Naive thymus-derived CD4-positive, alpha-beta T cell (primary cell): ENCODE measurements at regions of chr12 and their contacts with region 1.

Region 1: DNA sequence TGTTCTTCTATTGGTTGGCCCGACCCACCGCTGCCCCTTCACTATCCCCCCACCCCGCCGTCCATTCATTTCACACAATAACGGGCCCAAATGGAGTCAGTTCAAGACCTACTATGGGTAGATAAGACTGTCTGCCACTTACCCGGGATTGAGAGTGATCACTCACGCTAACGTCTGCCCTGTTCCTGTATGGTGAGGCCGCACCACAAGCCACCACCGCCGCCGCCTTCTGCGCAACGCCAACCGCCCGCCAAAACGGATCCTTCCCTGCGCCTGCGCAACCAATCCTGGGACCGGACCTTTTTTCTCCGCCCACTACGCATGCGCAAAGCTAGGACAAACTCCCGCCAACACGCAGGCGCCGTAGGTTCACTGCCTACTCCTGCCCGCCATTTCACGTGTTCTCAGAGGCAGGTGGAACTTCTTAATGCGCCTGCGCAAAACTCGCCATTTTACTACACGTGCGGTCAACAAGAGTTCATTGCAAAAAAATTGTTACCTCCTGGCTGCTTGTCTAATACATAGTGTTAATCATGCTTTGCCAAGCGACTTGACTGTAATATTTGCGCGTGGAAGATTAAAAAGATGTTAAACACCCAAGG is at the start of gene CBX5:
- DNase-seq: peak; percentile 98 to 100 (median 100)
- ATAC-seq: peak; percentile 63
- H3K4me3 ChIP-seq: peak within 1 kb of the TSS; percentile 97
- H3K4me3 Mint-ChIP-seq: no peak within 1 kb of the TSS
- H3K27ac ChIP-seq: peak within 1 kb of the TSS; percentile 92
- H3K27ac Mint-ChIP-seq: no peak within 1 kb of the TSS
- H3K4me1 ChIP-seq: peaks cover 46 to 52% of the 10 kb centered on the region in 2 donors
- H3K4me1 Mint-ChIP-seq: peaks cover 16 to 57% (median 47%) of the 10 kb centered on the region in 7 donors
- H3K27me3 ChIP-seq: no peaks in the 10 kb centered on the region
- H3K27me3 Mint-ChIP-seq: no peaks in the 10 kb centered on the region
- total RNA-seq, gene CBX5: 40.3 to 133 (median 77.2) TPM

Region 2: DNA sequence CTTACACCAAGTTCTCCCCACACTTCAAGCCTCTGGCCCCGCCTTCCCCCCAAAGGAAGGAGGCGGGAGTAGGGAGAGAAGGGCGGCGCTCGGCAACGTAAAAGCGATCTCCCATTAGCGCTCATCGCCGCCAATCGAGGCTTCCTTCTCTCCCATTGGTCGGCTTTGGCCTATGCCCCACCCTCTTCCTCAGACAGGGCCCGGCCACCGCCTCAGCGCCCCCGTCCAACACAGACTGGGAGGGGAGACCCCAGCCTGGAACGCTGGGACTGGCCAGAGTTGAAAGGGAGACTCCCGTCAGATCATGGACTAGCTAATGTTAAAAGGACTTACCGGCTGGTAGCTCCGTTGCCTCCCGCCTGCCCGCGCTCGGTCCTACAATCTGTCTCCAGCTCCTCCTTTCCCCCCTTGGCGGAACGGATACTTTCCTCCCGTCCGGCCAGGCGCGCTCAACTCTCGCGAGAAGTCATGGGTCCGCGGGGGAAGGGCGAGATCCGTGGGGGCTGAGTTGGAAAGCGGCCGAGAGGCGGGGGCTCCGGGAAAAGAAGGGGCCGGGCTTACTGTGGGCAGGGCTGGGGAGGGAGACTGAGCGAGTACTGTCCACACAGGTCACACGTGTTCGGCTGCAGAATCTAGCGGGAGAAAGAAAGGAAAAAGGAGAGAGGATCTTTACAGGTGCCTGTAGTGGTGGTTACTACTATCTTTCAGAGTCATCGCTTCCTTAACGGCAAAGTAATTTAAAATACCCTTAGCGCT is 653.8 kb before region 1 on chr12 and contains the start of gene ATF7:
- CTCF ChIA-PET with region 1: no interaction called
- POLR2A ChIA-PET with region 1: no interaction called
- intact Hi-C with region 1: loop called in 1 of 2 experiments (anchors 1 kb)
- DNase-seq: peak; percentile 95 to 100 (median 99)
- ATAC-seq: peak; percentile 97
- H3K4me3 ChIP-seq: peak within 1 kb of the TSS; percentile 92
- H3K4me3 Mint-ChIP-seq: peak within 1 kb of the TSS; percentile 97 to 100 (median 98)
- H3K27ac ChIP-seq: peak within 1 kb of the TSS; percentile 83
- H3K27ac Mint-ChIP-seq: peak within 1 kb of the TSS; percentile 95 to 99 (median 97)
- H3K4me1 ChIP-seq: peaks cover 20 to 32% of the 10 kb centered on the region in 2 donors
- H3K4me1 Mint-ChIP-seq: peaks cover 30 to 55% (median 49%) of the 10 kb centered on the region in 7 donors
- H3K27me3 ChIP-seq: no peaks in the 10 kb centered on the region
- H3K27me3 Mint-ChIP-seq: peaks cover 0 to 6% (median 0%) of the 10 kb centered on the region in 5 donors
- total RNA-seq, gene ATF7: 21.9 to 39.5 (median 30.9) TPM

Region 3: DNA sequence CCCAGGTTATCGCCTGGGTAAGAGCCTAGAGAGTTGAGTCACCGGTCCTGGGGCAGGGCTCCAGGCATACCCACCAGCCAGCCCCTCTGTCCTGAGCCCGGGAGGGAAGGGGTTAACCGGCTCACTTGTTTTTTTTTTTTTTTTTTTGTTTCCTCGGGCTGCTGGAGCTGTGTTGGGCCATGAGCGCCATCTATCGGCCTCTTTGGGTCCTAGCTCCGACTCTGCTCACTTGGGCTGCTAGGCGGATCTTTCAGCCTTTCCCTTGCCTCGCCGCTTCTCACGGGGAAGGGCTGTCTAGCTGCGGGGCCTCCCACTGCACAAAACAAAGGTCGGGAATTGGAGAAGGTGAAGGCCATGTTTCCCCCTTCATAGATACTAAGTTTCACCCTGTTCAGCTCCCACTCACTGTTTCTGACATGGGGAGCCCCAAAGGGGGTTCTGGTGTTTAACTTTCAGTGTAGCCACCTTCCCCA is 88.4 kb before region 1 on chr12:
- CTCF ChIA-PET with region 1: no interaction called
- POLR2A ChIA-PET with region 1: interaction called, 3 read pairs
- intact Hi-C with region 1: loop called in 1 of 2 experiments (anchors 1 kb)
- DNase-seq: peak; percentile 58 to 85 (median 76)
- ATAC-seq: peak; percentile 82
- H3K4me3 ChIP-seq: no peak overlapping the region
- H3K4me3 Mint-ChIP-seq: peak overlapping the region in 3 of 10 donors; percentile 10 to 44 (median 32)
- H3K27ac ChIP-seq: no peak overlapping the region
- H3K27ac Mint-ChIP-seq: peak overlapping the region in 3 of 9 donors; percentile 3 to 48 (median 17)
- H3K4me1 ChIP-seq: peaks cover 8 to 9% of the 10 kb centered on the region in 2 donors
- H3K4me1 Mint-ChIP-seq: peaks cover 17 to 31% (median 27%) of the 10 kb centered on the region in 7 donors
- H3K27me3 ChIP-seq: peaks cover 0 to 6% of the 10 kb centered on the region in 2 donors
- H3K27me3 Mint-ChIP-seq: peaks cover 39 to 61% (median 46%) of the 10 kb centered on the region in 5 donors

Region 4: GRCh38 chr12:54259194-54260011 is 20.6 kb before region 1 on chr12:
- CTCF ChIA-PET with region 1: interaction called, 3 read pairs
- POLR2A ChIA-PET with region 1: interaction called, 21 read pairs
- intact Hi-C with region 1: loop called (anchors 1 to 2 kb)
- DNase-seq: peak; percentile 17 to 70 (median 55)
- ATAC-seq: peak; percentile 87
- H3K4me3 ChIP-seq: no peak overlapping the region
- H3K4me3 Mint-ChIP-seq: peak overlapping the region in 9 of 10 donors; percentile 46 to 75 (median 71)
- H3K27ac ChIP-seq: peak overlapping the region; percentile 49
- H3K27ac Mint-ChIP-seq: peak overlapping the region; percentile 19 to 95 (median 78)
- H3K4me1 ChIP-seq: peaks cover 0 to 19% of the 10 kb centered on the region in 2 donors
- H3K4me1 Mint-ChIP-seq: peaks cover 16 to 43% (median 31%) of the 10 kb centered on the region in 7 donors
- H3K27me3 ChIP-seq: no peaks in the 10 kb centered on the region
- H3K27me3 Mint-ChIP-seq: no peaks in the 10 kb centered on the region

Region 5: GRCh38 chr12:54324617-54325441 is 44.9 kb after region 1 on chr12 and contains the start of gene COPZ1:
- CTCF ChIA-PET with region 1: interaction called, 3 read pairs
- POLR2A ChIA-PET with region 1: interaction called, 38 read pairs
- intact Hi-C with region 1: loop called (anchors 1 kb)
- DNase-seq: peak; percentile 69 to 98 (median 94)
- ATAC-seq: peak; percentile 97
- H3K4me3 ChIP-seq: peak within 1 kb of the TSS; percentile 95
- H3K4me3 Mint-ChIP-seq: peak within 1 kb of the TSS; percentile 87 to 100 (median 95)
- H3K27ac ChIP-seq: peak within 1 kb of the TSS; percentile 80
- H3K27ac Mint-ChIP-seq: peak within 1 kb of the TSS; percentile 91 to 99 (median 95)
- H3K4me1 ChIP-seq: peaks cover 4 to 22% of the 10 kb centered on the region in 2 donors
- H3K4me1 Mint-ChIP-seq: peaks cover 8 to 46% (median 42%) of the 10 kb centered on the region in 7 donors
- H3K27me3 ChIP-seq: no peaks in the 10 kb centered on the region
- H3K27me3 Mint-ChIP-seq: no peaks in the 10 kb centered on the region
- total RNA-seq, gene COPZ1: 47.5 to 141 (median 80.0) TPM

Region 6: DNA sequence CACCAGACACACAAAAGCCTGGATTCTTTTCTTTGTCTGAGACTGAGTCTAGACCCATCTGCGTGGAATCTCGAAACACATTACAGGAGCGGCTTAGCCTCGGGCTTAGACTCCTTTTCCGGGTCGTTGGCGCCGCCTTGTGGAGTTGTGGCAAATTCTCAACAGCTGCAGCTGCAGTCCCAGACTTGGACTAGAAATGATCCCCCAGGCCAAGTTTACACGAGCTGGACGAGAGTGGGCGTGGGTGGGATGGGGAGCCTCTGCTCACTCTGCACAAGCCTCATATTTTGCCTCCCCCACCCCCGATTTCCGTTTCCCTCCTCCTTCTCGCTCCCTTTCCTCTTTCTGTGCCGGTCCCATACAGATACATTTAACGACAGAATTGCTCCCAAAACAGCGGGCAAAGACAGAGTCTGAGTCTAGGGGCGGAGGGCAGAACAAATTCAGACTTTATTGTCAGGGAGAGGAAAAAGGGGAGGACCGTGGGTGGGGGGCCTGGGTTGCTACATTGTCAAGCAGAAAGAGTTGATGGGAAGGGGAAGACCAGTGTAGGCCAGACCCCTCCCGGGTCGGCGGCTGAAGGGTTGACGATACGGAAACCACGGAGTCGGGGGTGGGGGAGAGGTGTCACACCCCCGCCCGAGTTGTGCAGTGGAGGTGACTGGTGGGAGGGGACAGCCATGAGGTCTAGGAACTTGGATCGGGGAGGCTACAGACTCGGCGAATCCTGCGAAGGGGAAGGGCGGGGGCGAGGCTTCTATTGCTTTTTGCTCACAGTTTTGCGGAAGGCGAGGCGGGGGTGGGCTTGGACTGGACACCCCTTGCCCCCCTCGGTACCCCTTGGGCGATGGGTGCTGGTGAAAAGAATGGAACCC is 89.0 kb after region 1 on chr12:
- CTCF ChIA-PET with region 1: no interaction called
- POLR2A ChIA-PET with region 1: interaction called, 16 read pairs
- intact Hi-C with region 1: loop called in 1 of 2 experiments (anchors 2 kb)
- DNase-seq: peak; percentile 67 to 87 (median 83)
- ATAC-seq: peak; percentile 89
- H3K4me3 ChIP-seq: peak overlapping the region; percentile 46
- H3K4me3 Mint-ChIP-seq: peak overlapping the region; percentile 26 to 79 (median 68)
- H3K27ac ChIP-seq: no peak overlapping the region
- H3K27ac Mint-ChIP-seq: peak overlapping the region in 7 of 9 donors; percentile 20 to 87 (median 54)
- H3K4me1 ChIP-seq: peaks cover 12 to 24% of the 10 kb centered on the region in 2 donors
- H3K4me1 Mint-ChIP-seq: peaks cover 21 to 49% (median 38%) of the 10 kb centered on the region in 7 donors
- H3K27me3 ChIP-seq: no peaks in the 10 kb centered on the region
- H3K27me3 Mint-ChIP-seq: peaks cover 0 to 9% (median 0%) of the 10 kb centered on the region in 5 donors

Region 7: DNA sequence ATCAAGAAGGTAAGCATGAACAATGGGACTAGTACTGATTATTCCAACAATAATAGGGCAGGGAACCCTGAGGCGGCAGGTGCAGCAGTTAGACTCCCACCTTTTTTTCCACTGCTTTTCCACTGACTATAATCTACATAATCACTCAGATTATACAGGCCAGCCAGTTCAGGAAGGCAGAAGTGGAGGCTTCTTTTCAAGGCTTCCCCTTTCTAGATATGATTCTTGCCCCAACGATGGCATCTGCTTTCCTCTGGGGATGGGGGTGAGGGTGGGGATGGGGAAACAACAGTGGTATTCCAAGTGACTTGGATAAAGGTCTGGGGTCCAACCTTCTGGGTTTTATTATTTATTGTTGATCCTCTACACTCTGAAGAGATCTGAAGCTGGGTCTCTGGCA is 217.9 kb after region 1 on chr12:
- CTCF ChIA-PET with region 1: no interaction called
- POLR2A ChIA-PET with region 1: interaction called, 10 read pairs
- intact Hi-C with region 1: loop called in 1 of 2 experiments (anchors 1 kb)
- DNase-seq: no peak
- ATAC-seq: peak; percentile 3
- H3K4me3 ChIP-seq: peak overlapping the region; percentile 89
- H3K4me3 Mint-ChIP-seq: peak overlapping the region; percentile 97 to 99 (median 98)
- H3K27ac ChIP-seq: peak overlapping the region; percentile 77
- H3K27ac Mint-ChIP-seq: peak overlapping the region; percentile 88 to 98 (median 96)
- H3K4me1 ChIP-seq: peaks cover 19 to 31% of the 10 kb centered on the region in 2 donors
- H3K4me1 Mint-ChIP-seq: peaks cover 30 to 58% (median 41%) of the 10 kb centered on the region in 7 donors
- H3K27me3 ChIP-seq: no peaks in the 10 kb centered on the region
- H3K27me3 Mint-ChIP-seq: no peaks in the 10 kb centered on the region

Region 8: GRCh38 chr12:54759751-54760150 is 479.8 kb after region 1 on chr12:
- CTCF ChIA-PET with region 1: no interaction called
- POLR2A ChIA-PET with region 1: no interaction called
- intact Hi-C with region 1: no loop called
- DNase-seq: peak in 3 of 9 donors; percentile 14 to 45 (median 26)
- ATAC-seq: no peak
- H3K4me3 ChIP-seq: no peak overlapping the region
- H3K4me3 Mint-ChIP-seq: no peak overlapping the region
- H3K27ac ChIP-seq: no peak overlapping the region
- H3K27ac Mint-ChIP-seq: no peak overlapping the region
- H3K4me1 ChIP-seq: no peaks in the 10 kb centered on the region
- H3K4me1 Mint-ChIP-seq: peaks cover 0 to 20% (median 4%) of the 10 kb centered on the region in 7 donors
- H3K27me3 ChIP-seq: no peaks in the 10 kb centered on the region
- H3K27me3 Mint-ChIP-seq: peaks cover 0 to 24% (median 0%) of the 10 kb centered on the region in 5 donors